ENCODE measurements at regions of chr12 and their contacts with region 1.

Region 1: GRCh38 chr12:726281-727140 is 25.9 kb upstream of the WNK1 start:
- DNase-seq: no peak
- ATAC-seq: peak; percentile 87 to 97

Region 2: DNA sequence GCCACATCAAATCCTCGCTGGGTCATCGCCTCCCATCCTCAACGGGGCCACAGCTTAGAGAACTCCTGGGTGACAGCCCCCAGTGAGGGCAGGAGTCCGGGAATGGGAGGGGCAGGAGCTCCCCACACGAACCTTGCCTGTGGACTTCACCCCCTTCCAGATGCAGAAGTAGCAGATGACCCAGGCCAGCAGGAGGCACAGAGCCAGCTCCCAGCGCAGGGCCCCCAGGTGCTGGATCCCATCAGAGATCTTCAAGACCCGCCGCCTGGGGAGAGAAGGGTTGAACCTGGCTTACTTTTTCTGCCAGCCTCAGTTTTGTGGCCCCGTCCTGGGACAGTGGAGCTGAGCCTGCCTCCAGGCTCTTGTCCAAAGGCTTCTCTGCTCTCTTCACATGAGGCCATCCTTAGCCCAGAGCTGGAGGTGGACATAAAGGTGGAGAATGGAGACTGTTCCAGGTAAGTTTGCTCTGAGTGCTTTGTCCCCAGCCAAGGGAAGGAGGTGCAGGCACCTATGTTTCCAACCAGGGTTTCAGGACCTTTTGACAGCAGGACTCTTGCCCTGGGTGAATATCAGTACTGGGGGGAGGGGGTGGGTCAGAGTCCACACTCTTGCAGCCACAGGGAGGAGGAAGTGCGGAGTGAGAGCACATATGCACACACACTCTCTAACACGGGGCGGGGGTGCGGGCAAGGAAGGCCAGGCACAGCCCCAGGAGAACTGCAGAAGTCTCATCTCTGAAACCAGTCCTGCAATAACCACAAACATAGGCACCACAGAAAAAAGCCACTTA is 489.3 kb before region 1 on chr12:
- intact Hi-C with region 1: no loop called
- DNase-seq: no peak
- ATAC-seq: no peak

Region 3: DNA sequence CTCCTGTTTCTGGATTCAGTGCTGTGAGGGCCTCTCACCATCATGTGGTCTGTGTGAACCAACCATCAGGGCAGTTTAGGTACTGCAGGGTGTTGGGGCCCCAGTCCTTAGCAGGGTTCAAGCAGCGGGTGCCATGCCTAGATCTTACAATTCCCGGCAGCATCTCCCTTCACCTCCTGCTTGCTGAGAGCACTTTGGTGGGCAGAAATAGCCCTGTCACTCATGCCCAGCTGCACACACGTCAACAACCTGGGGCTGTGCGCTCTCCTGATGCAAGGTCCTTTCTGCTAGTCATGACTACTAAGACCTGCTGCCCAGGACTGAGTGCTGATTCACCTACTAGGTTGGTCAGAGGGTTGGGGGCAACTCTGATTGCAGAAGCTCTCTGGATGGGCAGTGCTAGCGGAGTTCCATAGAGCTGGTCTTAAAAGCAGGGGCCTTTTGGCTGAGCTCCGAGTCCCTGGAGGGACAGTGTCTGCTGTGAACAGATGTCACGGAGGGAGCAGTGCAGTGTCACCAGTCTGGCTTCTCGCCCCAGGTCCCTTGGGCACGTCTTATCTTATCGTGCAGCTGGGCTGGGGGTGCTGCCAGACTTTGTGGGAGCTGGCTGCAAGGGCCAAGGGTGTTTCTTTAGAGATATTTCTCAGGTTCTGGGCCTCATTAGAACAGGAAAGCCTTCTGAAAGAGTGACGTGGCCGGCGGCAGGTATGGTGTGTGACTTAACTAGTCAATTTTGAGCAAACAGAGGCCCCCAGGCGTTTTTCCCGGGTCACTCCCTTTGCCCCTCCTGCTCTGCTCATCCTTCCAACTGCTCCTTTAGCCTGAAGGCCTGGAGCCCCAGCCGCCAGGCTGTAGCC is 135.1 kb before region 1 on chr12:
- intact Hi-C with region 1: loop called in 1 of 2 experiments (anchors 5 kb)
- DNase-seq: peak; percentile 88
- ATAC-seq: peak; percentile 90 to 93

Region 4: GRCh38 chr12:1984759-1985158 is 1258.2 kb after region 1 on chr12:
- intact Hi-C with region 1: no loop called
- DNase-seq: no peak
- ATAC-seq: no peak

Measured in left cardiac atrium (tissue), 4 donors.